K562 (cell line): ENCODE measurements at regions of chr14 and their contacts with region 1.

Region 1: DNA sequence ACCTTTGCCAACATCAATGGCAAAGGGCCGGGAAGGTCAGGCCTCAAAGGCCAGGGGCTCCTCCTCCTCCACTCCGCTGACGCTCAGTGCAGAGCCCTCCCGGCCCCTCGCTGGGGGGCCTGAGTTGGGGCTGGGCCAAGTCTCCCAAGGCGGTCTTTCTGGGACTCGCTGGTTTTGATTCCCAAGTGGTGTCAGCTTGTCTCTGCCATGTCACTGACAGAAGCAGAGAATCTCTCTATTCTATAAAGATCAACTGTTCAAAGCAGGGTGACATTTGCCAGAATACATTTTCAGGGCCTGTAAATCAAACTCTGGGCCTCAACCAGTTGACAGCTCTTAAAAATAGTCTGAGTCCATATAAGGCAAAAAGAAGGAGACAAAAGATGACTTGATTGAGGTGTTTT is 75.9 kb downstream of the CCDC88C start:
- DNase-seq: no peak
- ATAC-seq: no peak
- H3K4me3 ChIP-seq: no peak overlapping the region
- H3K27ac ChIP-seq: no peak overlapping the region
- H3K4me1 ChIP-seq: peaks cover 0 to 4% of the 10 kb centered on the region in 2 experiments; a peak in 2 of 5 replicates
- H3K27me3 ChIP-seq: no peaks in the 10 kb centered on the region
- CTCF ChIP-seq: no peak
- EP300 ChIP-seq: no peak
- POLR2A ChIP-seq: no peak
- RAD21 ChIP-seq: no peak

Region 2: DNA sequence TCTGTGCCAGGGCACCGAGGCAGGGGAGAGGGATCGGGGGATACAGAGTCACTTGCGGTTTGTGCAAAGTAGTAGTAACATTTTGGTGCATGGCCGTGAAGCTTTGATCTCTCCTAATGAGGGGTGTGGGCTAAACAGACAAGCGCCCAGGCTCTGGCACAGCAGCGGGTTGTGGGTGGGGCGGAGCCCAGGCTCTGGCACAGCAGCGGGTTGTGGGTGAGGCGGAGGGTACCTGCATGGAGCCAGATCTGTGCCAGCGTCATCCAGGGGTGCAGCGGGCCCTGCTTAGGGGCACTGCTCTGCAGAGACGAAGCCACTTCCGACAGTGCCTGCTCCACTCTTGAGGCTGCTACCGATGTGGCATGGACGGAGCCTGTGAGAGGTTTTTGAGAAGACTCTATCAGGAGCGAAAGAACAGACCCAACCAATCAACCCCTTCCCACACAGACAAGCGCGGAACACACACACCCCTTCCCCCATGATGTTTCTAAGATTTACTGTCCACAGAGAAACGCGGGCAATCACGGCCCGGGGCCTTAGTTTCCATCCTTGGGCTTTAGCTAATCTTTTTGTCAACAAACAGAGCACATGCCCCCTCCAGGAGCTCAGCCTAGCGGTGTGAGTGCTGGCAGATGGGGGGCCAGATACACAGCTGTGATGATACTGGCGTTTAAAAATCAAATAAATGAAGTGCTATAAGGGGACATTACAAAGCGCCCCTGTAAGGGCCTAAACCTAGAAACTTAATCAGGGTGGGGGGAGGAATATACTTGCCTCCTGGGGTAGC is 748.3 kb before region 1 on chr14:
- CTCF ChIA-PET with region 1: no interaction called
- POLR2A ChIA-PET with region 1: no interaction called
- in situ Hi-C with region 1: no loop called
- intact Hi-C with region 1: no loop called
- DNase-seq: no peak
- ATAC-seq: no peak
- H3K4me3 ChIP-seq: no peak overlapping the region
- H3K27ac ChIP-seq: no peak overlapping the region
- H3K4me1 ChIP-seq: no peaks in the 10 kb centered on the region; a peak in 1 of 5 replicates
- H3K27me3 ChIP-seq: no peaks in the 10 kb centered on the region
- CTCF ChIP-seq: no peak
- EP300 ChIP-seq: no peak
- POLR2A ChIP-seq: no peak
- RAD21 ChIP-seq: no peak

Region 3: DNA sequence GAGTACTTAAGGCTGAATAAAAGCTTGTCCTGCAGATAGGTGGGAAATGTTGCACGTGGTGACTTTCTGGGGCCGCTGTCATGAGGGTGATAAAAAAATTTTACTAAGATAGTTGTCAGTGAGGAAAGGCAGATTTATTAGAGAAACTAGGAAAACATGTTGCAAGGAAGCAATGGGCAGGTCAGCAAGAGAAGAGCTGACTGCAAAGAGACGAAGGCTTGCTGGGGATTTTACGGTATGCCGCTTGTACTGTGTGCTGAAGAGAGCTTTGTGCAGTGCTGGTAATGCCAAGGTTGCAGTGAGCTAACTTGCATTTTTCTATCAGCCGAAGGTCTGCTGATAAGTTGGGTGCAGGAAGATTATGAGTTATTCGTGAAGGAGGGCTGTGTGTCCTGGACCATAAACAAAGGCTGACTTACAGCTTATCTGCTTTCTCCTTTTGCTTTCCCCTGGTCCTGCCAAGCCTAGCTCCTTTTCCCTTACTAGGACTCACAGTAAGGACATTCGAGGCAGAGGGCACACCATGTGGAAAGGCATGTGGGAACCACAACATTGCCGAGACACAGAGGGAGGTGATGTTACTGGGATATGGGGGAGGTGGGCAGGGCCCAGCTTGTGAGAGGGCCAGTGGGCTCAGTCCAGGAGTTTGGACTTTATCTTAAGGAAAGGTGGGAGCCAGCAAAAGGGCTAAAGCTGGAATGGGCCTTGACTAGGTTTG is 83.2 kb after region 1 on chr14:
- CTCF ChIA-PET with region 1: no interaction called
- POLR2A ChIA-PET with region 1: no interaction called
- in situ Hi-C with region 1: loop called (anchors 5 kb)
- intact Hi-C with region 1: no loop called
- DNase-seq: peak in 1 of 4 experiments; percentile 19
- ATAC-seq: peak; percentile 41
- H3K4me3 ChIP-seq: no peak overlapping the region
- H3K27ac ChIP-seq: peak overlapping the region; percentile 65; the same call in 2 of the 3 replicates
- H3K4me1 ChIP-seq: peaks cover 0 to 19% of the 10 kb centered on the region in 2 experiments; a peak in 3 of 5 replicates
- H3K27me3 ChIP-seq: no peaks in the 10 kb centered on the region
- CTCF ChIP-seq: no peak
- EP300 ChIP-seq: no peak
- POLR2A ChIP-seq: no peak
- RAD21 ChIP-seq: no peak